ENCODE measurements at regions of chr15 and their contacts with region 1.

Region 1: DNA sequence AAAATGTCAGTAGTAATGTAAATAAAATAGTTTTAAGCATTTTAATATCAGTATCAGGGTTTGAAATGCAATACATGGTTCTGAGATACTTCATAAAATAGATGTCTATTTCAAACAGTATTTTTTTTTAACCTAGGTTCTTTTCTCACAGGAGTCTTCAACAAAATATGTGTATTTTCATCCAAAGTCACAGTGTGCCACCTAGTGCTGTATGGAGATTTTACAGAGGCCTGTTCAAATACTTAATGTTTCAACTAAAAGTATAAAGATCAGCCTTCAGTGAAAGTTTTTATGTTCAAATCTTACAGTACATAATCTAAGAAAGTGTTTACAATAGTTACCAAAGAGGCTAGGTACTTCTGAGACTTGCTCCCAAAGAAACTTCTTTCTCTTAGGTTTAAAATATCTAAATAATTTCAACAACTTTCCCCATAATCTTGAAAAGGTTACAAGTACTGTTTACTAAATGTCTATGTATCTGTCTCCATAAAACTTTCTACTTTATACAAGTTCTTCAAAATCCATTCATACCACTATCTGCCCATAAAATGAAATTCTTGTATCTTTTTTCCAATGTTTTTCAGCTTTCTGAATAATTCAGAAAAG is 38.3 kb downstream of the SCAPER start:
- DNase-seq: peak in 4 of 14 experiments; percentile 4 to 23 (median 18)
- ATAC-seq: no peak
- H3K4me3 ChIP-seq: no peak overlapping the region
- H3K4me3 Mint-ChIP-seq: no peak overlapping the region
- H3K27ac ChIP-seq: no peak overlapping the region
- H3K27ac Mint-ChIP-seq: no peak overlapping the region
- H3K4me1 ChIP-seq: no peaks in the 10 kb centered on the region
- H3K4me1 Mint-ChIP-seq: peaks cover 41% of the 10 kb centered on the region
- H3K27me3 ChIP-seq: no peaks in the 10 kb centered on the region
- H3K27me3 Mint-ChIP-seq: no peaks in the 10 kb centered on the region
- CTCF ChIP-seq: peak; percentile 37

Region 2: DNA sequence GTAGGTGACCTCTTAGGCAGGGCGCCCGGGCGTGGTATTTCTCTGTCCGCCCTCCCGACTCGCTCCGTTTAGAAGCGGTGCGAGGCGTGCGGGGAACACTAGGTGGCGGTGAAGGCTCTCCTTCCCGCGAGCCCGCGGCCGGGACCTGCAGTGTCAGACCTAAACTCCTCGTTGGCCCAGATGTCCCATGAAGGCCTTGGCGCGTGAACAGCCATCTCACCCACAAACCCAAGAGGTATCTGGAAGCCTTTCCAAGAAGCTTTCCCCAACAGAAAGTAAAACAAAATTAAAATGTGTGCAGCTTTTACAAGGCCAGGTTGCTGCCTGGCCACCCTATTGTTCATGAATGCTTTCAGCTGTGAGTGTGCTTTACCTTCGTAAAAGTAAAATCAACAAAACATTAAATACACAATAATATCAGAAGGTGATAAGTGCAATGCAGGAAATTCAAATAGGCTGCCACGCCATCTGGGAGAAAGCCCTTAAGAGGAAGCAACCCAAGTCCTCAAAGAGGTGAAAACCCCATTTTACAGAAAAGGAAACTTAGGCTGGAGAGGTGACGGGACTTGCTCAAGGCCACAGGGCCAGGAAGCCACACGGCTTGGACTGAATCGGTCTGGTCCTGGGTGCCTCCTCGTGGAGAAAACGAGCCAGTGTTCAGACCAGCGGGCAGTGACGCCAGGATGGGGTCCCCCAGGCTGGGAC is 675.8 kb before region 1 on chr15:
- CTCF ChIA-PET with region 1: no interaction called
- POLR2A ChIA-PET with region 1: no interaction called
- intact Hi-C with region 1: loop called in 1 of 2 experiments (anchors 2 kb)
- DNase-seq: peak; percentile 29 to 74 (median 56)
- ATAC-seq: peak; percentile 84
- H3K4me3 ChIP-seq: peak overlapping the region; percentile 7
- H3K4me3 Mint-ChIP-seq: no peak overlapping the region
- H3K27ac ChIP-seq: no peak overlapping the region
- H3K27ac Mint-ChIP-seq: no peak overlapping the region
- H3K4me1 ChIP-seq: peaks cover 13% of the 10 kb centered on the region
- H3K4me1 Mint-ChIP-seq: peaks cover 7% of the 10 kb centered on the region
- H3K27me3 ChIP-seq: peaks cover 28% of the 10 kb centered on the region in 2 experiments
- H3K27me3 Mint-ChIP-seq: peaks cover 45% of the 10 kb centered on the region
- CTCF ChIP-seq: peak; percentile 91

Region 3: DNA sequence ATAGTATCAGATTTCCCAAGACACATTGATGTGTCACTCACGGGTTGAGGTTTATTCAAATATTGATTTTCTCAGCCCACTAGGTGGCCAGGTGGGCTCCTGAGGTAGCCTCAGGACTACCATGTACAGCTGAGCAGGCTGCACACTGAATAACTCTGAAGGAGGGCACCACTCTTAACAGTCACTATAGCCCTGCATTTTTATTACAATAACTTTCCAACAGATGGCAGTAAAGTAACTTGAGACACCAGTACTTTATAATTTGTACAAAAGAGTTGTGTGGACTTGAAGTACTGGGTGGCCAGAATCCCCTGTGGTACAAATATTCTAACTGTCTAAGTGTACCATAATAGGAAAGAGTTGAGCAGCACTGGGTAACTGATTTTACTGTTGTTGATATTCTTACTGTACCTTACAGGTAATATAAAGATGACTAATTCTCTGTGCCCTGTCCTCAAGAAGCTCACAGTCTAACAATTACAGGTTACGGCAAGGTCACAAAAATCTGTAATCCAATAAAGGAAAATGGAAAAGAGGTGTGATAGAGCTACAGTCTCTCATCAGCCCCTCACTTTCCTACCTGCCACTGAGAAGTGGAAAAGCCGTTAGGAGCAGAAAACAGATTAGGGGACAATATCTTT is 631.5 kb before region 1 on chr15:
- CTCF ChIA-PET with region 1: no interaction called
- POLR2A ChIA-PET with region 1: no interaction called
- intact Hi-C with region 1: loop called in 1 of 2 experiments (anchors 5 kb)
- DNase-seq: peak in 3 of 14 experiments; percentile 44 to 52 (median 45)
- ATAC-seq: no peak
- H3K4me3 ChIP-seq: no peak overlapping the region
- H3K4me3 Mint-ChIP-seq: no peak overlapping the region
- H3K27ac ChIP-seq: no peak overlapping the region
- H3K27ac Mint-ChIP-seq: no peak overlapping the region
- H3K4me1 ChIP-seq: no peaks in the 10 kb centered on the region
- H3K4me1 Mint-ChIP-seq: no peaks in the 10 kb centered on the region
- H3K27me3 ChIP-seq: no peaks in the 10 kb centered on the region
- H3K27me3 Mint-ChIP-seq: no peaks in the 10 kb centered on the region
- CTCF ChIP-seq: peak; percentile 62

Region 4: GRCh38 chr15:76376029-76376428 is 490.8 kb before region 1 on chr15:
- CTCF ChIA-PET with region 1: no interaction called
- POLR2A ChIA-PET with region 1: no interaction called
- intact Hi-C with region 1: no loop called
- DNase-seq: no peak
- ATAC-seq: no peak
- H3K4me3 ChIP-seq: no peak overlapping the region
- H3K4me3 Mint-ChIP-seq: no peak overlapping the region
- H3K27ac ChIP-seq: no peak overlapping the region
- H3K27ac Mint-ChIP-seq: no peak overlapping the region
- H3K4me1 ChIP-seq: no peaks in the 10 kb centered on the region
- H3K4me1 Mint-ChIP-seq: no peaks in the 10 kb centered on the region
- H3K27me3 ChIP-seq: no peaks in the 10 kb centered on the region
- H3K27me3 Mint-ChIP-seq: no peaks in the 10 kb centered on the region
- CTCF ChIP-seq: no peak

Region 5: DNA sequence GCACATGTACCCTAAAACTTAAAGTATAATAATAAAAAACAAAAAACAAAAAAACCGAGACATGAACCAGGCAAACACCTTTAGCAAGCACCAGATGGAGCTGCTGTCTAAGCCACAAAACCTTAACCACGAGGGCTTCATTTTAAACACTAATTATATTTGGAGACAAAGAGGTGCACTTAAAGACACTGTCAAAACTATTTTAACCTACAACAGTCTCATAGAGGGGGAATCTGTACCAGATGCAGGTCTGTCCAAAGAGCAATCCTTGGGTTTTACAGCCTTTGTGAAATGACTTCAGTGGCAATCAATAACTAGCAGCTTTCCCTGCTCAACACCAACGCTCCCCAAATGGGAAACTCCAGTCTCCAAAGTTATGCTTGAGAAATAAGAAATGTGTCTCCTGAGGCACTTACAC is 319.8 kb after region 1 on chr15:
- CTCF ChIA-PET with region 1: no interaction called
- POLR2A ChIA-PET with region 1: no interaction called
- intact Hi-C with region 1: no loop called
- DNase-seq: peak in 3 of 14 experiments; percentile 35 to 44 (median 40)
- ATAC-seq: no peak
- H3K4me3 ChIP-seq: no peak overlapping the region
- H3K4me3 Mint-ChIP-seq: no peak overlapping the region
- H3K27ac ChIP-seq: no peak overlapping the region
- H3K27ac Mint-ChIP-seq: no peak overlapping the region
- H3K4me1 ChIP-seq: peaks cover 7% of the 10 kb centered on the region
- H3K4me1 Mint-ChIP-seq: peaks cover 33% of the 10 kb centered on the region
- H3K27me3 ChIP-seq: no peaks in the 10 kb centered on the region
- H3K27me3 Mint-ChIP-seq: no peaks in the 10 kb centered on the region
- CTCF ChIP-seq: peak; percentile 16

Measured in CD4-positive, alpha-beta T cell (primary cell).